ENCODE measurements at regions of chrX and their contacts with region 1.

Region 1: DNA sequence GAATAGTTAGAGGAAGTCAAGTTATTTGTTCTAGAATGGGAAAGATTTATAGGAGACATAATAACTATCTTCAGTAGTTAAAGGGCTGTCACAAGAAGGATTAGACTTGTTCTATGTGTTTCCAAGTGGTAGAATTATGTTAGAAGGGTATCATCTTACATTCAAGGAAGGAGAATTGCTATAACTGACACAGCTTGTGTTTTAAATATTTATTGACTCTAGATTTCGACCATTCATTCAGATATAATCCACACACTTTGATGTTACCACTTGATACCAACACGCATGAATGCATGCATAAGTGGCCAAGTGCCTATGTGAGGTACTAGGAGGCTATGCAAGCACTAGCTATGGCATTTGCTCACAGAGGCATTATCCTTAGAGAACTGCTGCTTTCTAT is 122.7 kb downstream of the CCNB3 start:
- DNase-seq: no peak
- ATAC-seq: no peak
- H3K4me3 ChIP-seq: no peak overlapping the region
- H3K4me3 Mint-ChIP-seq: no peak overlapping the region
- H3K27ac ChIP-seq: no peak overlapping the region
- H3K27ac Mint-ChIP-seq: no peak overlapping the region
- H3K4me1 ChIP-seq: no peaks in the 10 kb centered on the region
- H3K4me1 Mint-ChIP-seq: no peaks in the 10 kb centered on the region
- H3K27me3 ChIP-seq: no peaks in the 10 kb centered on the region
- H3K27me3 Mint-ChIP-seq: no peaks in the 10 kb centered on the region
- CTCF ChIP-seq: no peak

Region 2: GRCh38 chrX:48631350-48632090 is 1695.7 kb before region 1 on chrX:
- CTCF ChIA-PET with region 1: no interaction called
- POLR2A ChIA-PET with region 1: no interaction called
- intact Hi-C with region 1: loop called in 1 of 2 experiments (anchors 10 kb)
- DNase-seq: peak; percentile 19 to 85 (median 54)
- ATAC-seq: peak; percentile 61
- H3K4me3 ChIP-seq: peak overlapping the region; percentile 5
- H3K4me3 Mint-ChIP-seq: no peak overlapping the region
- H3K27ac ChIP-seq: peak overlapping the region in 1 of 2 donors; percentile 7
- H3K27ac Mint-ChIP-seq: peak overlapping the region; percentile 12
- H3K4me1 ChIP-seq: peaks cover 13% of the 10 kb centered on the region
- H3K4me1 Mint-ChIP-seq: peaks cover 11% of the 10 kb centered on the region
- H3K27me3 ChIP-seq: no peaks in the 10 kb centered on the region
- H3K27me3 Mint-ChIP-seq: no peaks in the 10 kb centered on the region
- CTCF ChIP-seq: no peak